ENCODE measurements at regions of chr12 and their contacts with region 1.

Region 1: GRCh38 chr12:583234-583869 is 79.9 kb downstream of the NINJ2 start:
- DNase-seq: no peak
- ATAC-seq: peak; percentile 50

Region 2: DNA sequence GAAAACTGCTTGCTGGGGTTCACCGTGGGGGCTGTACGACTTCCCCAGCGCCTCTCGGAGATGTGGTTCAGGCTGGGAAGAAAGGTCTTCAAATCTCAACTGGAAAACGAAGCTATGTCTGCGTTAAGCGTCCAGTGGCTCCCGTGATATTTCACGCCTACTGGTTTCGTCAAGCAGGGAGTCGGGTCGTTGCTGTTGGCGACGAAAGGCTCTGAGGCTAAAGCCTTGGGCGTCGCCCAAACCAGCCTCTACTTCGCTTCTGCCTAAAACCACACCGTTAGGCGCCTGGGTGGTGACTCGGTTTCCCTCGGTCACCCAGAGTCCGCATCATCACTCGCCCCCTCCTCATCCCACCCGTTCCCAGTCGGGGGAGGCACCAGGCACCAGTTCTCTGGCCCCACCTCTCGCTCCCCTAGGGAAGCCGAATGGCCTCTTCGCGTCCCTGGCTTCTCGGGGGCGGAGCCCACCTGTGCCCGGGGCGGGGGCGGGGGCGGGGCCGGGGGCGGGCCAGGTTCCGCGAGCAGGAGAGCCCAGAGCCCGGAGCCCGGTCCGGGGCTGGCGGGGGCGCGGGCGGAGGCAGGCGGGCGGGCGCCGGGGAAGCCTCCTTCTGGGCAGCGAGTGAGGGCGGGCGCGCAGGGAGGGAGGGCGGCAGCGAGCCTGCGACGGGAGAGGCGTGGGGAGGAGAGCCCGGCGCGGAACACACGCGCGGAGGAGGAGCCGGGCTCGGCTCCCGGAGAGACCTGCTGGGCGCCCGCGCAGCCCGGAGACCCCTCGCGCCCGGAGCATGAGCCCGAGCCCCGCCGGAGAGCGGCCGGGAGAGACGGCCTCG is 123.7 kb before region 1 on chr12 and contains the start of gene B4GALNT3:
- intact Hi-C with region 1: no loop called
- DNase-seq: peak; percentile 66 to 75
- ATAC-seq: peak; percentile 74
- total RNA-seq, gene B4GALNT3: 131 to 143 TPM

Region 3: GRCh38 chr12:530308-530707 is 53.0 kb before region 1 on chr12:
- intact Hi-C with region 1: no loop called
- DNase-seq: no peak
- ATAC-seq: peak; percentile 76

Region 4: DNA sequence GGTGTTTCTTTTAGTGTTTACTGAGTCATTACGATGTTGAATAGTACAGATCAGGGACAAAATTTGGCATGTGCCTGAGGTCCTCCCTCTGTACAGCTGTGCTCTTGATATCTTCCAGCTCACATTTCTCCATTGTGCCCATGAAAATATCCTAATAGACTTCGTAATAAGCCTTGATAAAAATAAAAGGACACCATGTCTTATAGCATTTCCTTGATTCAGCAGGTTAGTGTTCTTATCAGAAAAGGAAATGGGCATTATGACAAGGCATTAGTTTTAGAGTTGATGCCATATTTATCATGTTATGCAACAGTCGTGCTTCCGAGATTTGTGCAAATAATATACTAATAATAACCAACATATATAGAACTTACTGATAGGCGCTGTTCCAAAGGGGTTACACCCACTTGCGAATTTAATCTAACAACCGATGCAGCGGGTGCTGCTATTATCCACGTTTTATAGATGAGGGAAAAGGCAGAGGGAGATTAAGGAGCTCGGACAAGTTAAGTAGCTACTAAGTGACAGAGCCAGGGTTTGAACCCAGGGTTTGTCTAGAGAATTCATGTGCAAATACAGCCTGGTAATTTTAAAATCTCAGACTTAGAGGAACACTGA is 153.9 kb after region 1 on chr12:
- intact Hi-C with region 1: loop called in 1 of 2 experiments (anchors 10 kb)
- DNase-seq: no peak
- ATAC-seq: no peak

Measured in left colon (tissue), 2 donors.